CD4-positive, alpha-beta T cell (primary cell): ENCODE measurements at regions of chr11 and their contacts with region 1.

Region 1: DNA sequence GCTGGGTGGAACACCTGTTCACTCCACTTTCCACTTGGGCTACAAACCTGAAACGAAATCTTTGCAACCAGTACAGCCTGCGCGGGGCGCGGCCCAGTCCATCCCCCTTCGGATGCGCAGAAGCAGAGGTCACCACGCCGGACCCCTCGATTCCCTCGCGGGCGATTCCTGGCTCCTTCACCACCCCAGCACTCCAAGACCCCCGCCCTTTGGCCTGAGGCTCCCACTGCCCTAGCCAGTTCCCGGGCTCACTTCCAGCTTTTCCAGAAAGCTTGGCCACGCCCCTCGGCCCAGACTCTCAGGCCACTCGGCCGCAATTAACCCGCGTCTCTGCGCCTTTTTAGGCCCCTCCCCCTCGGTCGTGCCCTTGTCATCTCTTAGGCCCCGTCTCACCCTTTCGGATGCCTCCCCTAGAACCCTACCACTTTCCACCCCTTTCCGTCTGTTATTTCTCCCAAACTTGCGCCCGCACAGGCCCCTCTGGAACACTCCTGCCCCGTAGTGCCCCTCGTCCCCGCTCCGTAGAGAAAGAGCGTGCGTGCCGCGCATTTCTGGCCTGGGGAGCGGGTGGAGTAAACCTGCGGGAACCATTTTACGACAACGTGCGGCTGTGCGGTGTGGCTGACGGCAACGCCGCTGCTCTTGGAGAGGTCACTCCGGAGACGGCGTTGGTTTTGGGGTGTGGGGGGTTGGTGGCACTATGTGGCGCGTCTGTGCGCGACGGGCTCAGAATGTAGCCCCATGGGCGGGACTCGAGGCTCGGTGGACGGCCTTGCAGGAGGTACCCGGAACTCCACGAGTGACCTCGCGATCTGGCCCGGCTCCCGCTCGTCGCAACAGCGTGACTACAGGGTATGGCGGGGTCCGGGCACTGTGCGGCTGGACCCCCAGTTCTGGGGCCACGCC is at the start of gene DLAT:
- DNase-seq: peak; percentile 60 to 91 (median 75)
- ATAC-seq: peak; percentile 86
- H3K4me3 ChIP-seq: peak within 1 kb of the TSS; percentile 85
- H3K4me3 Mint-ChIP-seq: peak within 1 kb of the TSS; percentile 100
- H3K27ac ChIP-seq: peak within 1 kb of the TSS; percentile 78 to 84
- H3K27ac Mint-ChIP-seq: peak within 1 kb of the TSS; percentile 98
- H3K4me1 ChIP-seq: peaks cover 10% of the 10 kb centered on the region
- H3K4me1 Mint-ChIP-seq: peaks cover 43% of the 10 kb centered on the region
- H3K27me3 ChIP-seq: no peaks in the 10 kb centered on the region
- H3K27me3 Mint-ChIP-seq: no peaks in the 10 kb centered on the region
- CTCF ChIP-seq: no peak
- total RNA-seq, gene DLAT: 10.7 to 10.8 TPM

Region 2: DNA sequence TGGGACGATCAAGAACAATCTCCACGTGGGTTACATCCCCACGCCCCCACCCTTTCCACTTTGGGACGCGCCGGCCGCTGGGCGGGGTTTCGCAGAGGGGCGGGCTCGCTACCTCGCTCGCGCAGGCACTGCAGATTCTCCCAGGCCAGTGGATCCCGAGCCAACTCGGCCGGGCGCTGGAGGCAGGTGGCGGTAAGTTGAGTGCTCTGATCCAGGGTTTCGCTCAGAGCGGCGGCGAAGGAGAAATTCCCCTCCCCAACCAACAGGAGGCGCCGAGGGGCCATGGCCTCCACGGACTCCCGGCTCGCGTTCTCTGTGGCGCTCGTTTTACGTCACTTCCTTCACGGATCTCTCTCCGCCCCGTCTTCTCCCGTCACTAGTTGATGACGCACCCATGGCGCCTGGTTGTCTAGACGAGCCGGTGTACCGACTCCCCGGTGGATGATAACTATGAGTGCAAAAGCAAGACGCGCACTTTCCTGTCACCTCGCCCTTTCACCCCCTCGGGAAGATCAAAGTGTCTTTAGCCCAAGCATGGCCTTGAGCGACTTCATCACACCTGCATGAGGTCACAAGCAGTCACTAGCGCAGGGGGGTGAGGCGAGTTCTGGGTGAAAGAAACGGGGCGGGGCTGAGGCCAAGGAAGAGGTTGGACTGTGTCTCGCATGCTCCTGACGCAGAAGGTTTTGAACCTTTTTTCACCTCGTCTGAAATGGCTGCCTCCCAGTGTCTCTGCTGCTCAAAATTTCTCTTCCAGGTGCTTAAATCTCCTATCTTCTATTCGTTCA is 146.0 kb before region 1 on chr11 and contains the starts of genes CFAP68 and FDXACB1:
- CTCF ChIA-PET with region 1: no interaction called
- POLR2A ChIA-PET with region 1: no interaction called
- intact Hi-C with region 1: loop called (anchors 2 to 5 kb)
- DNase-seq: peak; percentile 89 to 99 (median 93)
- ATAC-seq: peak; percentile 88
- H3K4me3 ChIP-seq: peak within 1 kb of the TSS; percentile 76
- H3K4me3 Mint-ChIP-seq: peak within 1 kb of the TSS; percentile 92
- H3K27ac ChIP-seq: peak within 1 kb of the TSS; percentile 97 to 99
- H3K27ac Mint-ChIP-seq: peak within 1 kb of the TSS; percentile 94
- H3K4me1 ChIP-seq: peaks cover 14% of the 10 kb centered on the region
- H3K4me1 Mint-ChIP-seq: peaks cover 18% of the 10 kb centered on the region
- H3K27me3 ChIP-seq: no peaks in the 10 kb centered on the region
- H3K27me3 Mint-ChIP-seq: no peaks in the 10 kb centered on the region
- CTCF ChIP-seq: peak; percentile 98
- total RNA-seq, gene CFAP68: 18.7 to 21.0 TPM
- total RNA-seq, gene FDXACB1: 3.4 to 3.9 TPM

Region 3: GRCh38 chr11:111918390-111919258 is 106.4 kb before region 1 on chr11 and contains the start of gene C11orf52:
- CTCF ChIA-PET with region 1: no interaction called
- POLR2A ChIA-PET with region 1: no interaction called
- intact Hi-C with region 1: no loop called
- DNase-seq: no peak
- ATAC-seq: no peak
- H3K4me3 ChIP-seq: no peak within 1 kb of the TSS
- H3K4me3 Mint-ChIP-seq: no peak within 1 kb of the TSS
- H3K27ac ChIP-seq: no peak within 1 kb of the TSS
- H3K27ac Mint-ChIP-seq: no peak within 1 kb of the TSS
- H3K4me1 ChIP-seq: no peaks in the 10 kb centered on the region
- H3K4me1 Mint-ChIP-seq: no peaks in the 10 kb centered on the region
- H3K27me3 ChIP-seq: peaks cover 15 to 17% of the 10 kb centered on the region in 2 experiments
- H3K27me3 Mint-ChIP-seq: peaks cover 46% of the 10 kb centered on the region
- CTCF ChIP-seq: no peak
- total RNA-seq, gene C11orf52: not detected

Region 4: DNA sequence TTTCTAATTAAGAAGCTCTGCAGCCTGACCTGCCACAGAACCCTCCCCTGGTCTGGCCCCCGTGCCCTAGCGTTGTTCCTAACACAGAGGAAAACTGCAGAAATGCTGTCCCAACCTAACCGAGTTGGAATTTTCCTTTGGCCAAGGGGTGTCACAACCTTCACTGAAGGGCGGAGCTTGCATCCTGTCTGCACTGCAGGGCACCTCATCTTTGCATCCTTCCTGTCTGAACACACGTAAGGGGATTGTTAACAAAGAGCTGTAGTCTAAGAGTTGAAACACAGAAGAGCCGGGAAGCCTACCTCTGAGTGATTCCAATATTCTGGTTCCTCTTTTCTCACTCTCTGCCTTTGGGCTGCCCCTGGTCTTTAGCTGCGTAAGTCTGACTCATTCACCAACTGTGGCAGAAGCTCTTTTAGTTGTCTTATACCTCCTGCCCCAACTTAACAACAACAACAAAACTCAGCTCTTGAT is 86.3 kb before region 1 on chr11:
- CTCF ChIA-PET with region 1: no interaction called
- POLR2A ChIA-PET with region 1: no interaction called
- intact Hi-C with region 1: loop called in 1 of 2 experiments (anchors 5 kb)
- DNase-seq: peak in 5 of 14 experiments; percentile 11 to 62 (median 51)
- ATAC-seq: peak; percentile 72
- H3K4me3 ChIP-seq: no peak overlapping the region
- H3K4me3 Mint-ChIP-seq: peak overlapping the region; percentile 70
- H3K27ac ChIP-seq: peak overlapping the region in 1 of 2 donors; percentile 25
- H3K27ac Mint-ChIP-seq: peak overlapping the region; percentile 84
- H3K4me1 ChIP-seq: peaks cover 26% of the 10 kb centered on the region
- H3K4me1 Mint-ChIP-seq: peaks cover 39% of the 10 kb centered on the region
- H3K27me3 ChIP-seq: no peaks in the 10 kb centered on the region
- H3K27me3 Mint-ChIP-seq: no peaks in the 10 kb centered on the region
- CTCF ChIP-seq: no peak

Region 5: GRCh38 chr11:112074026-112074811 is 49.2 kb after region 1 on chr11 and contains the start of gene NKAPD1:
- CTCF ChIA-PET with region 1: interaction called, 3 read pairs
- POLR2A ChIA-PET with region 1: no interaction called
- intact Hi-C with region 1: loop called (anchors 1 to 5 kb)
- DNase-seq: peak; percentile 65 to 92 (median 74)
- ATAC-seq: peak; percentile 87
- H3K4me3 ChIP-seq: peak within 1 kb of the TSS; percentile 80
- H3K4me3 Mint-ChIP-seq: peak within 1 kb of the TSS; percentile 97
- H3K27ac ChIP-seq: peak within 1 kb of the TSS; percentile 70 to 73
- H3K27ac Mint-ChIP-seq: peak within 1 kb of the TSS; percentile 78
- H3K4me1 ChIP-seq: peaks cover 13% of the 10 kb centered on the region
- H3K4me1 Mint-ChIP-seq: peaks cover 36% of the 10 kb centered on the region
- H3K27me3 ChIP-seq: no peaks in the 10 kb centered on the region
- H3K27me3 Mint-ChIP-seq: peaks cover 27% of the 10 kb centered on the region
- CTCF ChIP-seq: no peak
- total RNA-seq, gene NKAPD1: 14.8 to 16.0 TPM

Region 6: DNA sequence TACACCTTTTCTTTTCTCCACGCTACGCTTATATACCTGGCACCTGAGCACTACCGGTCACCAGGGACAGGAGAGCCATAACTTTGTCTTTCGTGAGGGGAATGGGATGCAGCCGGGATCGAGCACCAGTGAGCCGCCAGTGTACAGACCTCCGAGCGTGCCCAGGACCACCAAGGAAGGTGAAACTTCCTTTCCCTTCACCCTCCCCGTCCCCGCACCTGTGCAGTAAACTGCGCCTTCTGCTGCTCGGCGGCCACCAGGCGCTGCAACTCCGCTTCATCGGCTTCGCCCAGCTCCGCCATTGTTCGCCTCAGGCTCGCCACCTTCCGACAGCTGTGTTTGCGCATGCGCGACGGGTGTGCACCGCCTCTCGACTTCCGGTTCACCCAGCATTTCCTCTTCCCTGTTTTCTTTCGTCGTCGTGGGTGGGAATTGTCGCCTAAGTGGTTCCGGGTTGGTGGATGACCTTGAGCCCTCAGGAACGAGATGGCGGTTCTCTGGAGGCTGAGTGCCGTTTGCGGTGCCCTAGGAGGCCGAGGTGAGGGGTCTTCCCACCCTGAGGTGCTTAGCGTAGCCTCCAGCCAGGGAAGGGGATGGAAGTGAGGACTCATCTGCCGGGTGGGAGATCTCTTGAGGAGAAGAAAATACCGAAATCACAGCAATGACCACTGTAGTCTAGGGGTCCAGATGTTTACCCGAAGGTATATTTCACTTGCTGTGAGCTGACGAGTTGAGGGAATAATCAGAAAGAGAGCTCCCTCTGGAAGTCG is 61.6 kb after region 1 on chr11 and contains the starts of genes SDHD and TIMM8B:
- CTCF ChIA-PET with region 1: no interaction called
- POLR2A ChIA-PET with region 1: interaction called, 4 read pairs
- intact Hi-C with region 1: loop called (anchors 2 to 5 kb)
- DNase-seq: peak; percentile 91 to 99 (median 94)
- ATAC-seq: peak; percentile 93
- H3K4me3 ChIP-seq: peak within 1 kb of the TSS; percentile 88
- H3K4me3 Mint-ChIP-seq: peak within 1 kb of the TSS; percentile 99
- H3K27ac ChIP-seq: peak within 1 kb of the TSS; percentile 35 to 75
- H3K27ac Mint-ChIP-seq: peak within 1 kb of the TSS; percentile 94
- H3K4me1 ChIP-seq: peaks cover 32% of the 10 kb centered on the region
- H3K4me1 Mint-ChIP-seq: peaks cover 54% of the 10 kb centered on the region
- H3K27me3 ChIP-seq: no peaks in the 10 kb centered on the region
- H3K27me3 Mint-ChIP-seq: no peaks in the 10 kb centered on the region
- CTCF ChIP-seq: peak; percentile 29
- total RNA-seq, gene SDHD: 24.8 to 29.4 TPM
- total RNA-seq, gene TIMM8B: 9.1 to 10.5 TPM